B cell (primary cell): ENCODE measurements at regions of chr13 and their contacts with region 1.

Region 1: DNA sequence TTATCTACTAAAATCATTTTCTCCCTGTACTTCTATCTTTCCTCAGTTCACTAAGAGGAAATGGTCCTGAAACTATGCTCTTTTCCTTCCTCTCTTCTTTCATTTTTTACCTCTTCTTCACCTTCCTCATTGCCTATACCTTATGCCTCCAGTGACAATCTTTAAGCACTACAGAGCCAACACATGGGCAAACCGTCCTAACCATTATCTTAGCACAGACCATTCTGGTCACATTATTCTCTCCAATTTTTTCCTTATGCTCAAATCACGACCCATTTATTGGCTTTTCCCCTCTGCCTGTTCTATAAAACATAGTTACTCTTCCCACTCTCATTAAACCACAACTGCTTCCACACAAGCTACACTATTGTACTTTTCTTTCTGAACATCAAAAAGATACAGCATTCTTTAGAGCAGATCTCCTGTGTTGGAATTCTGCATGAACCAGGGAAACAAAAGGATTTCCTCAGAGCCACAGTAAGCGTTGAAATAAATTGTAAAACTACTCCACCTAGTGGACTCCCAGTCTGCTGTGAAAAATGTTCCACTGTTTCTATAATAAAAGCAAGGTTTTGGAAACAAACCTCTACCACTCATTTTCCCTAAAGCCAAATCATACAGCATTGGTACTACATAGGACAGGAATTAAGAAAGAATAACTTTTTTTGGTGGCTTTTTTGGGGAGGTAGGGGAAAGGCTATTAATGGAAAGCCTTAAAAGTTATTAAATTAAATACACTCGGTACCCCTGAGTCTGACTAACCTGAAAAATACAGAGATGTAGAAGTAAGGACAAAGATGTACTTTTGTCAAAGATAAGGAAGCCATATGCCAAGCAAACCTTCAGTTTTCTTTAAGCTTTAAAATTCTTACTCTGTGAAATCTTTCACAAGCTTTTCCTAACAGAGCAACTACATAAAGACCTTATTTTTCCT is 19.5 kb downstream of the NUFIP1 start:
- DNase-seq: peak; percentile 37
- ATAC-seq: no peak
- H3K4me3 ChIP-seq: no peak overlapping the region
- H3K4me3 Mint-ChIP-seq: no peak overlapping the region
- H3K27ac ChIP-seq: no peak overlapping the region
- H3K27ac Mint-ChIP-seq: no peak overlapping the region
- H3K4me1 ChIP-seq: peaks cover 9 to 16% of the 10 kb centered on the region in 2 donors
- H3K4me1 Mint-ChIP-seq: no peaks in the 10 kb centered on the region
- H3K27me3 ChIP-seq: no peaks in the 10 kb centered on the region
- H3K27me3 Mint-ChIP-seq: no peaks in the 10 kb centered on the region
- CTCF ChIP-seq: peak; percentile 75

Region 2: DNA sequence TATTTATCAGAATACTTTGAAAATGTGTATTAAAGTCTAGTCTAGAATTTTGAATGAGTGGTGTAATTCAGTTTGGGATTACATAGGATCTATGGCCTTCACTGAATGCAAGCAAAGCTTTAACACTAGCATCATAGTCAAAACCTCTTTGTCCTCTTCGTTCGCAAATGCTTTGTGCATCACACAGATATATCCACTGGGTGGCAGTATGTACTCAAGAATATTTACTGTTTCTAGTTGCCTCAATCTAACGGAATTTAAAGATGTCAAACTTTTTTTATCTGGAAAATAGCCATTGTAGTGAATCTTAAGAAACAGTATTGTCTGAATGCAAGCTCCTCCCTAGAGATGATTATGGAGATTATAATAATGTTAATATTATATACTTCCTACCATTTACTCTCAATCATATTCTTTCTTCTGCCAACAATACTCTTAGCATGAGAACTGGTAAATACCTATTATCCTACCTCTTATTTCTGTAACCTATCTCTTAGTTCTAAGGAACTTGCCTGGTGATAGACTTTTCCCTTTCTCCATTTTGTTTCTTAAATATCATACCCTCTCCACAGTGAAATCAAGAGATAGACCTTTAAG is 1064.3 kb before region 1 on chr13:
- CTCF ChIA-PET with region 1: interaction called, 3 read pairs
- POLR2A ChIA-PET with region 1: no interaction called
- intact Hi-C with region 1: loop called (anchors 5 kb)
- DNase-seq: peak; percentile 70
- ATAC-seq: peak; percentile 72
- H3K4me3 ChIP-seq: no peak overlapping the region
- H3K4me3 Mint-ChIP-seq: no peak overlapping the region
- H3K27ac ChIP-seq: no peak overlapping the region
- H3K27ac Mint-ChIP-seq: no peak overlapping the region
- H3K4me1 ChIP-seq: no peaks in the 10 kb centered on the region
- H3K4me1 Mint-ChIP-seq: peaks cover 1% of the 10 kb centered on the region
- H3K27me3 ChIP-seq: no peaks in the 10 kb centered on the region
- H3K27me3 Mint-ChIP-seq: peaks cover 27% of the 10 kb centered on the region
- CTCF ChIP-seq: peak; percentile 90

Region 3: DNA sequence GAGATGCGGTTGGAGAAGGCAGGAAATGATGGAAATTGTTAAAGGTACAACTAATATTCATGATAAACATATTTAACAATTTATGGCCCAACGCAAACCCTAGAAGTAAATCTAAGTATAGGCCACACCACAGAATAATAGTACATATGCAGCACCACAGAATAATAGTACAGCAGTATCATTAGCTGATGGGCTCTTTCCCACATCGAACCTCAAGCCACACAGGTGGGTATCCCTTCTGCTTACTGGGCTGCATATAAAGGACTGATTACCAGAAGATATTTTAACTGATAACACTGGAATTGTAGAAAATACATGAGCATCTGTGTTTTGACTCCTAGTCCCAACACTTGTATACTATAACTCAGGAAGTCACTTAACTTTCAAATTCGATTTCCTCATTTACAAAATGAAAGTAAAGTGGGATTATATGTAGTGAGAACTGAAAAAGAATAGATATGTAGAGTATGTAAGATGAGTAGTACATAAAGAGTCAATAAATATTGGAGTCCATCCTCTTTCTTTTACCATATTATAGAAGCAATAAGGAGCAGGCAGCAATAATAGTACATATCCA is 485.2 kb before region 1 on chr13:
- CTCF ChIA-PET with region 1: interaction called, 156 read pairs
- POLR2A ChIA-PET with region 1: no interaction called
- intact Hi-C with region 1: loop called (anchors 1 kb)
- DNase-seq: peak; percentile 48
- ATAC-seq: no peak
- H3K4me3 ChIP-seq: peak overlapping the region in 3 of 5 experiments; percentile 18 to 44 (median 26)
- H3K4me3 Mint-ChIP-seq: peak overlapping the region; percentile 76
- H3K27ac ChIP-seq: peak overlapping the region in 1 of 2 donors; percentile 56
- H3K27ac Mint-ChIP-seq: peak overlapping the region; percentile 63
- H3K4me1 ChIP-seq: peaks cover 10 to 11% of the 10 kb centered on the region in 2 donors
- H3K4me1 Mint-ChIP-seq: peaks cover 30% of the 10 kb centered on the region
- H3K27me3 ChIP-seq: no peaks in the 10 kb centered on the region
- H3K27me3 Mint-ChIP-seq: no peaks in the 10 kb centered on the region
- CTCF ChIP-seq: no peak

Region 4: GRCh38 chr13:44826591-44827350 is 143.0 kb before region 1 on chr13:
- CTCF ChIA-PET with region 1: no interaction called
- POLR2A ChIA-PET with region 1: no interaction called
- intact Hi-C with region 1: no loop called
- DNase-seq: no peak
- ATAC-seq: no peak
- H3K4me3 ChIP-seq: no peak overlapping the region
- H3K4me3 Mint-ChIP-seq: no peak overlapping the region
- H3K27ac ChIP-seq: no peak overlapping the region
- H3K27ac Mint-ChIP-seq: no peak overlapping the region
- H3K4me1 ChIP-seq: no peaks in the 10 kb centered on the region
- H3K4me1 Mint-ChIP-seq: no peaks in the 10 kb centered on the region
- H3K27me3 ChIP-seq: peaks cover 0 to 2% (median 0%) of the 10 kb centered on the region in 4 experiments
- H3K27me3 Mint-ChIP-seq: no peaks in the 10 kb centered on the region
- CTCF ChIP-seq: no peak

Region 5: GRCh38 chr13:45119991-45120864 is 150.4 kb after region 1 on chr13 and contains the start of gene GTF2F2:
- CTCF ChIA-PET with region 1: no interaction called
- POLR2A ChIA-PET with region 1: no interaction called
- intact Hi-C with region 1: loop called (anchors 5 kb)
- DNase-seq: peak; percentile 94
- ATAC-seq: peak; percentile 81
- H3K4me3 ChIP-seq: peak within 1 kb of the TSS; percentile 68 to 100 (median 92)
- H3K4me3 Mint-ChIP-seq: no peak within 1 kb of the TSS
- H3K27ac ChIP-seq: peak within 1 kb of the TSS; percentile 66 to 93
- H3K27ac Mint-ChIP-seq: no peak within 1 kb of the TSS
- H3K4me1 ChIP-seq: peaks cover 20 to 21% of the 10 kb centered on the region in 2 donors
- H3K4me1 Mint-ChIP-seq: peaks cover 7% of the 10 kb centered on the region
- H3K27me3 ChIP-seq: no peaks in the 10 kb centered on the region
- H3K27me3 Mint-ChIP-seq: no peaks in the 10 kb centered on the region
- CTCF ChIP-seq: no peak
- total RNA-seq, gene GTF2F2: 19.6 and 23.6 TPM in 2 replicates

Region 6: DNA sequence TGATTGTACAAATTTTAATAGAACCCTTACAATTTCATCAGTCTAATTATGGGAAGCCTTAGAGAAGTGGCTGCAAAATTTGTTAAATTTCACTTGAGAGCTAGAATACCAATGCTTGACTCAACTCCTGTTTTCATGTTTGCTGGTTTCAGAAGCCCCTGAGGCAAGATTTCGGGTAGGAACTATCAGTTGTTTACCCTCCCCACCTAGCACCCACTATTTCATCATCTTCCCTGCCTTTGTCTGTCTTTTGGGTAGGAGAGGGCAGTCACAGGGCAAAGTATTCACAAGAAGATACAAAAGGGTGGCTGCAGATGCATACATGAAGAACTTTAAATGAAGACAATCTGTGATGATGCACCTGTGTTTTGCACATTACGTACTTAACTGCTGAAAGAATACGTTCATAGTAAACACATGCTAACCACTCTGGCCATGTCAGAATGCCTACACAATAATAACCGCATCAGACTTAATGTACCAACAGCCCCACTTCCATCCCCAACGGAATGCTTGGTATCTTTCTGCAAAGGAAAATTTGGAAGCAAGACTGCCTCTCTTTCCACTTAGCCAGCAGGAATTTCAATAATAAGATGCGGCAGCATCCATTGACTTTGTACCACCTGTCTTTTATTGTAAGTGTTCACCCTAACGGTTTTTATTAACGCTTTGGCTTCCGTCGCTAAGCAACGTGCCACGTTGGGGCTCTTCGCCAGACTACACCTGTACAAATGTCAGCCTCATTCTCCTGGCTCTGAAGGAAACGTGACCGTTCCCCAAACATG is 340.7 kb after region 1 on chr13:
- CTCF ChIA-PET with region 1: interaction called, 10 read pairs
- POLR2A ChIA-PET with region 1: no interaction called
- intact Hi-C with region 1: loop called (anchors 1 kb)
- DNase-seq: no peak
- ATAC-seq: no peak
- H3K4me3 ChIP-seq: peak overlapping the region in 3 of 5 experiments; percentile 53 to 69 (median 57)
- H3K4me3 Mint-ChIP-seq: peak overlapping the region; percentile 84
- H3K27ac ChIP-seq: no peak overlapping the region
- H3K27ac Mint-ChIP-seq: no peak overlapping the region
- H3K4me1 ChIP-seq: peaks cover 11 to 16% of the 10 kb centered on the region in 2 donors
- H3K4me1 Mint-ChIP-seq: peaks cover 17% of the 10 kb centered on the region
- H3K27me3 ChIP-seq: peaks cover 0 to 21% (median 13%) of the 10 kb centered on the region in 4 experiments
- H3K27me3 Mint-ChIP-seq: peaks cover 34% of the 10 kb centered on the region
- CTCF ChIP-seq: no peak